Adrenal gland (tissue), 19 donors: ENCODE measurements at regions of chr15 and their contacts with region 1.

Region 1: GRCh38 chr15:79769069-79769481 is 127.7 kb downstream of the MTHFS start:
- DNase-seq: peak in 5 of 7 donors; percentile 22 to 61 (median 51)
- H3K4me3 ChIP-seq: no peak overlapping the region
- H3K27ac ChIP-seq: no peak overlapping the region
- H3K4me1 ChIP-seq: no peaks in the 10 kb centered on the region
- H3K27me3 ChIP-seq: no peaks in the 10 kb centered on the region
- CTCF ChIP-seq: peak; percentile 7 to 37 (median 26)
- POLR2A ChIP-seq: no peak

Region 2: DNA sequence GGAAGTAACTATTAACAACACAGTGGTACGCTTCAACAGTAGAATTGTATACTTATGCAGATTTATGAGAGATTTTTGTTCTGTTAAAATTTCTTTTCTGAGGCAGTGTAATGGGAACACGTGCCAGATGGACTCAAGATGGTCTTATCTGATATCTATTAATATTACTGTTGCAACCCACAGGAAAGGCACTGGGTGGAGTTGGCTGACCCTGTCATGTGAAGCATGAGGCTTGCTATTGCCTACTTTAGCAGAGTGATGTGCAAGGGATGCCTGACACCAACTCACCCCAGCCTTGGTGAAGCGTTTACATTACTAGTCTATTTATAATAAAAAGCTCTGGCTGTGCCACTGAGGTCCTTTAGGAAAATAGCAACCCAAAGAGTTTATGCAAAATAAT is 615.4 kb after region 1 on chr15:
- intact Hi-C with region 1: loop called in 1 of 2 experiments (anchors 10 kb)
- DNase-seq: peak in 3 of 7 donors; percentile 16 to 53 (median 27)
- H3K4me3 ChIP-seq: no peak overlapping the region
- H3K27ac ChIP-seq: no peak overlapping the region
- H3K4me1 ChIP-seq: no peaks in the 10 kb centered on the region
- H3K27me3 ChIP-seq: no peaks in the 10 kb centered on the region
- CTCF ChIP-seq: no peak
- POLR2A ChIP-seq: no peak